Activated CD8-positive, alpha-beta T cell treated with anti-CD3 and anti-CD28 coated beads, Interleukin-2, amount 10 ng/mL, durations not matched to agents 7 days and 5 days (primary cell): ENCODE measurements at regions of chr13 and their contacts with region 1.

Region 1: GRCh38 chr13:30114571-30115256 is 192.6 kb downstream of the KATNAL1 start:
- DNase-seq: peak; percentile 94
- ATAC-seq: peak; percentile 96
- H3K4me3 Mint-ChIP-seq: peak overlapping the region; percentile 78
- H3K27ac Mint-ChIP-seq: peak overlapping the region; percentile 9
- H3K4me1 Mint-ChIP-seq: peaks cover 38% of the 10 kb centered on the region
- H3K27me3 Mint-ChIP-seq: peaks cover 8% of the 10 kb centered on the region

Region 2: DNA sequence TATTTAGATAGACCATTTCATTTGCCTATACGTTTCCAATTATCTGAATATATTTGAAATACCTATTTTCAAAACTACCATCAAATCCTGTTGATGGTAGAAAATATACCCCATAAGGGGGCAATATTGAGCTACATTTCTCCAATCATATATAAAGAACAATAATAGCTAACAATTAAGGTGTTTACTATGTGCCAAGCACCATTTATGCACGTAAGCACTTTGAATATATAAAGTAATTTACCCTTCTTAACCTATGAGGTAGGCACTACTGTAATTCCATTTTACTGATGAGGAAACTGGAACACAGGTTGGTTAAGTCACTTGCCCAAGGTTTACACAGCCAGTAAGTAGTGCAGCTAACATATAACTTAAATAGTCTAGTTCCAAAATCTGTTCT is 343.5 kb before region 1 on chr13:
- CTCF ChIA-PET with region 1: interaction called, 271 read pairs
- POLR2A ChIA-PET with region 1: interaction called, 3 read pairs
- DNase-seq: no peak
- ATAC-seq: no peak
- H3K4me3 Mint-ChIP-seq: no peak overlapping the region
- H3K27ac Mint-ChIP-seq: no peak overlapping the region
- H3K4me1 Mint-ChIP-seq: no peaks in the 10 kb centered on the region
- H3K27me3 Mint-ChIP-seq: no peaks in the 10 kb centered on the region

Region 3: GRCh38 chr13:29840585-29840984 is 274.1 kb before region 1 on chr13:
- CTCF ChIA-PET with region 1: interaction called, 232 read pairs
- POLR2A ChIA-PET with region 1: no interaction called
- DNase-seq: no peak
- ATAC-seq: no peak
- H3K4me3 Mint-ChIP-seq: no peak overlapping the region
- H3K27ac Mint-ChIP-seq: no peak overlapping the region
- H3K4me1 Mint-ChIP-seq: peaks cover 3% of the 10 kb centered on the region
- H3K27me3 Mint-ChIP-seq: no peaks in the 10 kb centered on the region

Region 4: GRCh38 chr13:29935309-29935981 is 179.3 kb before region 1 on chr13:
- CTCF ChIA-PET with region 1: interaction called, 143 read pairs
- POLR2A ChIA-PET with region 1: interaction called, 4 read pairs
- DNase-seq: peak; percentile 90
- ATAC-seq: peak; percentile 95
- H3K4me3 Mint-ChIP-seq: peak overlapping the region; percentile 83
- H3K27ac Mint-ChIP-seq: peak overlapping the region; percentile 95
- H3K4me1 Mint-ChIP-seq: peaks cover 44% of the 10 kb centered on the region
- H3K27me3 Mint-ChIP-seq: peaks cover 1% of the 10 kb centered on the region

Region 5: GRCh38 chr13:30125422-30126073 is 10.8 kb after region 1 on chr13:
- CTCF ChIA-PET with region 1: interaction called, 46 read pairs
- POLR2A ChIA-PET with region 1: no interaction called
- DNase-seq: no peak
- ATAC-seq: no peak
- H3K4me3 Mint-ChIP-seq: no peak overlapping the region
- H3K27ac Mint-ChIP-seq: no peak overlapping the region
- H3K4me1 Mint-ChIP-seq: peaks cover 21% of the 10 kb centered on the region
- H3K27me3 Mint-ChIP-seq: no peaks in the 10 kb centered on the region